Lower leg skin (tissue), 4 donors: ENCODE measurements at regions of chr12 and their contacts with region 1.

Region 1: GRCh38 chr12:120404271-120404670 is 33.6 kb upstream of the COX6A1 start:
- DNase-seq: no peak
- H3K4me3 ChIP-seq: no peak overlapping the region
- CTCF ChIP-seq: no peak
- POLR2A ChIP-seq: no peak

Region 2: DNA sequence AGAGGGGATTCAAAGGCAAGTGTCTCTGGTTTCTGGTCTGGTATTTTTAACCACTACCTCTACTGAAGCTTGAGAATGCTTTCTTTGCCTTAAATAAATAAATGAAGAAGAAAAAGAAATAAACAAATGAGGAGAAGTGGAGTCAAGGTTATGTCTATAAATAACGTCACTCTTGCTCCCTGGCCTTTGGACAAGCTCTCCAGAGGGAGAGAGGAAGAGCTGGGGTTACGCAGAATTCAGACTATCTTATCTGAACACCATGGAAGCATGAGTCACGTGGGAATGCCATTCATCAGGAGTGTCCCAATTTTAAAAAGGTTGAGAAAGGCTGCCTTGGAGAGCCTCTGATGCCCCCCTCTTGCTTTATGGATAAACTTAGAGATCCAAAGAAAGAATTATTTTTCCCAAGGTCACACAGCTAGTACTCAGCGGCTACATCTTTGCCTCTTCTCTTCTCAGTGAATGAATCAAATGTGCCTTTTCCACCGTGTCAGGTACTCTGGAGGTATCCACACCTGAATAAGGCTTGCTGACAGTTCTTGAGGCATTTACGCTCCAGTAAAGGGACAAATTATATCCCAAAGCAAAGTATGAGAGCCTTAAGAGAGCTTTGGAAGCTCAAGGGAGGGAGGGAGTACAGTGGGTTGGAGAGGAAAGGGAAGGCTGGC is 22.4 kb before region 1 on chr12:
- intact Hi-C with region 1: loop called (anchors 1 kb)
- DNase-seq: no peak
- H3K4me3 ChIP-seq: no peak overlapping the region
- CTCF ChIP-seq: no peak
- POLR2A ChIP-seq: no peak

Region 3: GRCh38 chr12:120445911-120446843 is 41.9 kb after region 1 on chr12 and contains the starts of genes GATC and TRIAP1:
- intact Hi-C with region 1: no loop called
- DNase-seq: peak; percentile 75 to 97
- H3K4me3 ChIP-seq: peak within 1 kb of the TSS; percentile 98
- CTCF ChIP-seq: no peak
- POLR2A ChIP-seq: no peak
- total RNA-seq, gene GATC: 19.3 to 24.1 (median 20.1) TPM
- total RNA-seq, gene TRIAP1: 9.6 to 20.2 (median 16.1) TPM

Region 4: DNA sequence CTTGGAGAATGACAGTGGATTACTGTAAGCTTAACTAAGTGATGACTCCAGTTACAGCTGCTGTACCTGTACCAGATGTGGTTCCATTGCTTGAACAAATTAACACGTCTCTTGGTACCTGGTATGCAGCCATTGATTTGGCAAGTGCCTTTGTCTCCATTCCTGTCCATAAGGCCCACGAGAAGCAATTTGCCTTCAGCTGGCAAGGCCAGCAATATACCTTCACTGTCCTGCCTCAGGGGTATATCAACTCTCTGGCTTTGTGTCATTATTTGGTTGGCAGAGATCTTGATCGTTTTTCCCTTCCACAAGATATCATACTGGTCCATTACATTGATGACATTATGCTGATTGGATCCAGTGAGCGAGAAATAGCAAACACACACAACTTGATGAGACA is 206.3 kb after region 1 on chr12:
- intact Hi-C with region 1: no loop called
- DNase-seq: no peak
- H3K4me3 ChIP-seq: no peak overlapping the region
- CTCF ChIP-seq: no peak
- POLR2A ChIP-seq: no peak